Activated CD4-positive, alpha-beta T cell treated with anti-CD3 and anti-CD28 coated beads for 36 hours (primary cell): ENCODE measurements at regions of chr17 and their contacts with region 1.

Region 1: GRCh38 chr17:44363613-44364159 is at the start of gene FAM171A2:
- DNase-seq: peak; percentile 84
- ATAC-seq: peak; percentile 90
- H3K4me3 Mint-ChIP-seq: peak within 1 kb of the TSS; percentile 53
- H3K27ac Mint-ChIP-seq: no peak within 1 kb of the TSS
- H3K4me1 Mint-ChIP-seq: peaks cover 2% of the 10 kb centered on the region
- H3K27me3 Mint-ChIP-seq: peaks cover 22% of the 10 kb centered on the region
- total RNA-seq, gene FAM171A2: 0.18 to 0.32 TPM

Region 2: DNA sequence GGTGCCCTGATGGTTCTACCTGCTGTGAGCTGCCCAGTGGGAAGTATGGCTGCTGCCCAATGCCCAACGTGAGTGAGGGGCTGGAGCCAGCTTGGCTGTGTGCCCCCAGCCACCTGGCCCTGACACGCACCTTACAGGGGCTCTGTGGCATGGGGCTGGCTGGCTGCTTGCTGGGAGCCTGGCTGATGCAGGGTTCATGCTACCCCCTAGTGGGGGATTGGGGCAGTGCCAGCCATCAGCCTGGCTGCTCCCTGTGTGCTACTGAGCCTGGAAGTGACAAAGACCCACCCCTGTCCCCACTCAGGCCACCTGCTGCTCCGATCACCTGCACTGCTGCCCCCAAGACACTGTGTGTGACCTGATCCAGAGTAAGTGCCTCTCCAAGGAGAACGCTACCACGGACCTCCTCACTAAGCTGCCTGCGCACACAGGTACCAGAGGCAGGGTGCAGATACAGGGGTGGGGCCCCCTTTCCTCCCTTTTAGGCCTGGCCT is 12.9 kb before region 1 on chr17:
- CTCF ChIA-PET with region 1: interaction called, 25 read pairs
- POLR2A ChIA-PET with region 1: no interaction called
- intact Hi-C with region 1: loop called in 1 of 2 experiments (anchors 1 kb)
- DNase-seq: peak; percentile 86
- ATAC-seq: peak; percentile 86
- H3K4me3 Mint-ChIP-seq: no peak overlapping the region
- H3K27ac Mint-ChIP-seq: no peak overlapping the region
- H3K4me1 Mint-ChIP-seq: peaks cover 4% of the 10 kb centered on the region
- H3K27me3 Mint-ChIP-seq: no peaks in the 10 kb centered on the region

Region 3: DNA sequence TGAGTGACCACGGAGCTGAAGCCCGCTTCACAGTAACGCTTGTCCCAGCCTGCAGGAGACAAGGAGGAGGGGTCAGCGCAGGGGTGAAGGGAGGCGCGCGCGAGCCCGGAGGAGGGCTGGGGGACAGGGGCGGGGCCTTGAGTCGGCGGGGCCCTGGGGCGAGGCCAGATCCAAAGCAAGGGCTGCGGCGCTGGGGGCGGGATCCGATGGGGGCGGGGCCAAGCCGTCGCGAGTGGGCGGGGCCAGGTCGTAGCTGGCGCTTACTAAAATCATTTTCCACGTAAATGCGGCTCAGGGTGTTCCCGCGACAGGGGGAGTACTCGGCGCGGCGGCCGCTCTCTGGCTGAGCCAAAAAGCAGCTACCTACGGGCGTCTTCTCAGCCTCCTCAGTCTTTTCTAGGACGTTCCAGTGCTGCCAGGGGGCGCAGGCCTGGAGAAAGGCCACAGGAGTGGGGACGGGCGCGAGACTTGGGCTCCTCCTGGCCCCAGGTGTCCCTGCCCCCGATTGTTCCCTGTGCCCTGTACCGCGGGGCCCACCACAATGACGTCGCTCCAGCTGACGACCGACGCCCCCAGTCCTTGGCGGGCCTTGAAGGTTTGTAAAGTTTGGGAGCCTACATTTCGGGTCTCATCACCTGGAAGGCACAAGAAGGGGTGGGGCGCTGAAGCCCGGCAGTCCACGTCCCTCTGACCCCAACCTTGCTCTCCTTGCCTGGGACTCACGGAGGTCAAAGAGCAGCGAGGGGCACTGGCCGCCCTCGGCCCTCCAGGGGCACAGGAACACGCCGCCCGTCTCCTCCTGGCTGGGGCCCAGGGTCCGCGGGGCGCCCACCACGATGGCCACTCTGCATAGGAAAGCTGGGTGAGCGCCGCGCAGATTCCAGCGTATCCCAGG is 21.8 kb after region 1 on chr17:
- CTCF ChIA-PET with region 1: interaction called, 4 read pairs
- POLR2A ChIA-PET with region 1: no interaction called
- intact Hi-C with region 1: loop called in 1 of 2 experiments (anchors 1 kb)
- DNase-seq: peak; percentile 96
- ATAC-seq: peak; percentile 96
- H3K4me3 Mint-ChIP-seq: peak overlapping the region; percentile 62
- H3K27ac Mint-ChIP-seq: peak overlapping the region; percentile 21
- H3K4me1 Mint-ChIP-seq: peaks cover 12% of the 10 kb centered on the region
- H3K27me3 Mint-ChIP-seq: peaks cover 22% of the 10 kb centered on the region